ENCODE measurements at regions of chr15 and their contacts with region 1.

Region 1: DNA sequence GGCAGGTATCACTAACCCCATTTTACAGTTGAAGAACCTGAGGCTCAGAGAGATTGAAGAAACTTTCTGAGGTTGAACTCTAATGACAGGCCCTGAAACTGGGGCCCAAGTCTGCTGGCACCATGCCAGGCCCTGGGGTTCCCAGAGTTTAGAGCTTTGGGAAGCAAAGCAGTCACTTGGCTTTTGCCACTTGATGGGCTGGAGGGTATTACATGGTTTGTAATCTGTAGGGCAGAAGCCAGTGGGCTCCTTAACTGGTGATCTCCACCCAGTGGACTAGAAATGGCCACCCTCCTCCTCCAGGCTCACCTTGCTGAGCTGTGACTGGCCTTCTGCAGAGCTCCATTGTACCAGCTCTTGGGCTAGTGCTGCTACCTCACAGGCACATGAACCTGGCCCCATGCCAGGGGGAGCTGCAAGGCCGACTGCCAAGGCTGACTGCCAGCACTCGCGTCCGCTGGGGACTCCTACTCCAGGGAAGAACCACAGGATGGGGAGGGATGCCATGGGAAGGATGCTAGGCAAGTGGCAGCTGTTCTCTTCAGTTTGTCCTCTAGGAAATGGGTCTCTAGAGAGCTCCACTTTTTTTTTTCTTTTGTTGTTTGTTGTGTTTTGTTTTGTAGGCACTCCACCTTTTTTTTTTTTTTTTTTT is 104.8 kb downstream of the ETFA start:
- DNase-seq: peak; percentile 65
- H3K27ac ChIP-seq: peak overlapping the region; percentile 89
- CTCF ChIP-seq: no peak

Region 2: DNA sequence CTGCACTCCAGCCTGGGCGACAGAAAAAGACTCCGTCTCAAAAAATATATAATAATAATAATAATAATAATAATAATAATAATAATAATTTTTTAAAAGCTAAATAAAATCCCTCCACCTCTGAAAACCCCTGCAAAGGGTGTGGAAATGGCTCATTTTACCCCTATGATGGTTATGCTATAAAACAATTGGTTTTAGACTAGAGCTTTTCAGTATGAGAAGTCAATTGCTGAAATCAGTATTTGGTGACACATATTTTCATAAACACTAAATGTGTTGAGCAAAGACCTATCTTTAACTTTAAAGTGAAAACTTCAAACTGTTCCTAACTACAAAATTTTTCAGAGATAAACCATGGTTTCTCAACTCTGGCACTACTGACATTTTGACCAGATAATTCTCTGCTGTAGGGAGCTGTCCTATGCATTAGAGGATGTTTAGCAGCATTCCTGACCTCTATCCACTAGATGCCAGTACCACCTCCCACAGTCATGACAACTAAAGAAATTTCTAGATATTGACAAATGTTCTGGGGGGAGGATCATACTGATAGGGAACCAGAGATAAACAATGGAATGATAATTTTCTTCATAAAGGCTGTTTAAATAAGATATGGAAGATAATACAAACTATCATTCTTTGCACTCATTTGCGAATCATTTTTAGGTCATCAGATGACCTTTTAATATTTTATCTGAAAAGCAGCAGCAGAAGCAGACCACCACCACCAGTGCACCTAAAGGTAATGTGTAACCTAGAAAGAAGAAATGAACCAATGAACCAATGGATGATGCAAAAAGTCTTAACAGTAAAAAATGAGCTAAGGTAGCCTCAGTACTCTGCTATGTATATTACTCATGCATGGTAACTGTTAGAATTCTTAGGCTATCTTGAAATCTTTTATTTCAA is 641.1 kb before region 1 on chr15:
- CTCF ChIA-PET with region 1: no interaction called
- POLR2A ChIA-PET with region 1: no interaction called
- DNase-seq: no peak
- H3K27ac ChIP-seq: no peak overlapping the region
- CTCF ChIP-seq: no peak

Region 3: GRCh38 chr15:75776065-75776423 is 430.4 kb before region 1 on chr15:
- CTCF ChIA-PET with region 1: no interaction called
- POLR2A ChIA-PET with region 1: no interaction called
- DNase-seq: no peak
- H3K27ac ChIP-seq: no peak overlapping the region
- CTCF ChIP-seq: no peak

Region 4: DNA sequence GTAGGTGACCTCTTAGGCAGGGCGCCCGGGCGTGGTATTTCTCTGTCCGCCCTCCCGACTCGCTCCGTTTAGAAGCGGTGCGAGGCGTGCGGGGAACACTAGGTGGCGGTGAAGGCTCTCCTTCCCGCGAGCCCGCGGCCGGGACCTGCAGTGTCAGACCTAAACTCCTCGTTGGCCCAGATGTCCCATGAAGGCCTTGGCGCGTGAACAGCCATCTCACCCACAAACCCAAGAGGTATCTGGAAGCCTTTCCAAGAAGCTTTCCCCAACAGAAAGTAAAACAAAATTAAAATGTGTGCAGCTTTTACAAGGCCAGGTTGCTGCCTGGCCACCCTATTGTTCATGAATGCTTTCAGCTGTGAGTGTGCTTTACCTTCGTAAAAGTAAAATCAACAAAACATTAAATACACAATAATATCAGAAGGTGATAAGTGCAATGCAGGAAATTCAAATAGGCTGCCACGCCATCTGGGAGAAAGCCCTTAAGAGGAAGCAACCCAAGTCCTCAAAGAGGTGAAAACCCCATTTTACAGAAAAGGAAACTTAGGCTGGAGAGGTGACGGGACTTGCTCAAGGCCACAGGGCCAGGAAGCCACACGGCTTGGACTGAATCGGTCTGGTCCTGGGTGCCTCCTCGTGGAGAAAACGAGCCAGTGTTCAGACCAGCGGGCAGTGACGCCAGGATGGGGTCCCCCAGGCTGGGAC is 15.5 kb before region 1 on chr15:
- CTCF ChIA-PET with region 1: interaction called, 11 read pairs
- POLR2A ChIA-PET with region 1: no interaction called
- DNase-seq: peak; percentile 89
- H3K27ac ChIP-seq: peak overlapping the region; percentile 49
- CTCF ChIP-seq: peak; percentile 98